Testis (tissue), 5 donors: ENCODE measurements at regions of chr4 and their contacts with region 1.

Region 1: DNA sequence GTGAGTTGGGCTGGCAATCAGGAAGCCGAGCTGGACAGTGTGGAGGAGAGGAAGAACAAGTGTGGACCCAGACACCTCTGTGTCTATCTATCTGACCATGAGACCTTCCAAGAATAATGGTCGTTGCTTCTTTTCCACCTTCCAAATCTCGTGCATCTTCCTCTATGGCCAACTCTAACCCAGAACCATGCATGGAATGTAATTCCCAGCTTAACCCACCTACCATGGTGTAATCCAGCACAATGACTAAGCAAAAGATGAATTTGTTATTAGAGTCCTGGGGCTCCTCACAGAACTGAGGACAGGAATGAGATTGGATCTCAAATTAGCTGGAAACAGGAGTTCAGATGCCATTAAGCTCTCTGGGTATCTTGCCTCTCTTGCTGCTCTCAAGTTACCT is 17.4 kb upstream of the TMEM184C start:
- DNase-seq: no peak
- H3K4me3 ChIP-seq: no peak overlapping the region
- H3K27ac ChIP-seq: no peak overlapping the region
- H3K4me1 ChIP-seq: peaks cover 14% of the 10 kb centered on the region
- H3K27me3 ChIP-seq: no peaks in the 10 kb centered on the region
- CTCF ChIP-seq: no peak
- POLR2A ChIP-seq: no peak

Region 2: DNA sequence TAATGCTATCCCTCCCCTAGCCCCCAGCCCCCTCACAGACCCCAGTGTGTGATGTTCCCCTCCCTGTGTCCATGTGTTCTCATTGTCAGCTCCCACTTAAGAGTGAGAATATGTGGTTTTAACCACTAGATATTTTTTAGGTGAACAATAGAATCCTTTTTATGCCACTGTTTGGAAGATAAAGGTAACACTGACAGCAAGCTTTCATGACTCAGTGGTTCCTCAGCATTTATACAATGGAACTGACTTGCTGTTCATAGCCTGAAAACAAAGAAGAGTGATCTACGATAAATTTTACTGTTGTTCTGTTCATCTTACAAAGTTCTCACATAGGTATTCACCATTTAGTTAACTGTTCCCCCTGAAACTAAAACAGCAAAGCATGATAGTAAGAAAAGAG is 279.9 kb after region 1 on chr4:
- intact Hi-C with region 1: loop called (anchors 10 kb)
- DNase-seq: no peak
- H3K4me3 ChIP-seq: no peak overlapping the region
- H3K27ac ChIP-seq: no peak overlapping the region
- H3K4me1 ChIP-seq: no peaks in the 10 kb centered on the region
- H3K27me3 ChIP-seq: no peaks in the 10 kb centered on the region
- CTCF ChIP-seq: no peak
- POLR2A ChIP-seq: no peak